Heart right ventricle (tissue), 16 donors: ENCODE measurements at regions of chr13 and their contacts with region 1.

Region 1: GRCh38 chr13:32117701-32118100 is 86.1 kb downstream of the FRY start:
- DNase-seq: peak; percentile 38 to 71
- ATAC-seq: peak; percentile 92 to 100 (median 95)
- H3K4me3 ChIP-seq: no peak overlapping the region
- H3K27ac ChIP-seq: peak overlapping the region; percentile 0 to 81 (median 71)
- H3K4me1 ChIP-seq: peaks cover 4 to 68% (median 57%) of the 10 kb centered on the region in 9 donors
- H3K27me3 ChIP-seq: no peaks in the 10 kb centered on the region
- CTCF ChIP-seq: no peak

Region 2: GRCh38 chr13:32031025-32031814 is 86.5 kb before region 1 on chr13 and contains the start of gene FRY:
- intact Hi-C with region 1: loop called in 1 of 10 experiments (anchors 5 kb)
- DNase-seq: peak; percentile 70
- ATAC-seq: peak; percentile 81 to 89 (median 88)
- H3K4me3 ChIP-seq: peak within 1 kb of the TSS; percentile 47 to 76 (median 70)
- H3K27ac ChIP-seq: peak within 1 kb of the TSS in 9 of 10 donors; percentile 61 to 83 (median 76)
- H3K4me1 ChIP-seq: peaks cover 0 to 34% (median 9%) of the 10 kb centered on the region in 9 donors
- H3K27me3 ChIP-seq: no peaks in the 10 kb centered on the region
- CTCF ChIP-seq: peak in 4 of 9 donors; percentile 20 to 37 (median 27)
- total RNA-seq, gene FRY: 111 to 268 (median 241) TPM

Region 3: GRCh38 chr13:32045982-32046785 is 71.5 kb before region 1 on chr13:
- intact Hi-C with region 1: loop called in 1 of 10 experiments (anchors 10 kb)
- DNase-seq: no peak
- ATAC-seq: peak; percentile 35 to 74 (median 55)
- H3K4me3 ChIP-seq: no peak overlapping the region
- H3K27ac ChIP-seq: peak overlapping the region in 6 of 10 donors; percentile 21 to 71 (median 42)
- H3K4me1 ChIP-seq: peaks cover 6 to 66% (median 45%) of the 10 kb centered on the region in 9 donors
- H3K27me3 ChIP-seq: no peaks in the 10 kb centered on the region
- CTCF ChIP-seq: no peak

Region 4: GRCh38 chr13:32060401-32060878 is 57.3 kb before region 1 on chr13:
- intact Hi-C with region 1: loop called in 1 of 10 experiments (anchors 10 kb)
- DNase-seq: peak in 1 of 2 donors; percentile 11
- ATAC-seq: peak; percentile 73 to 95 (median 90)
- H3K4me3 ChIP-seq: peak overlapping the region in 3 of 10 donors; percentile 29 to 46 (median 40)
- H3K27ac ChIP-seq: peak overlapping the region; percentile 24 to 86 (median 74)
- H3K4me1 ChIP-seq: peaks cover 0 to 67% (median 29%) of the 10 kb centered on the region in 9 donors
- H3K27me3 ChIP-seq: no peaks in the 10 kb centered on the region
- CTCF ChIP-seq: no peak

Region 5: GRCh38 chr13:32150794-32151193 is 33.1 kb after region 1 on chr13:
- intact Hi-C with region 1: loop called in 1 of 10 experiments (anchors 5 kb)
- DNase-seq: peak; percentile 73 to 78
- ATAC-seq: peak; percentile 89 to 96 (median 93)
- H3K4me3 ChIP-seq: no peak overlapping the region
- H3K27ac ChIP-seq: peak overlapping the region; percentile 41 to 89 (median 79)
- H3K4me1 ChIP-seq: peaks cover 0 to 46% (median 21%) of the 10 kb centered on the region in 9 donors
- H3K27me3 ChIP-seq: no peaks in the 10 kb centered on the region
- CTCF ChIP-seq: no peak